CD4-positive, alpha-beta T cell (primary cell): ENCODE measurements at regions of chr9 and their contacts with region 1.

Region 1: DNA sequence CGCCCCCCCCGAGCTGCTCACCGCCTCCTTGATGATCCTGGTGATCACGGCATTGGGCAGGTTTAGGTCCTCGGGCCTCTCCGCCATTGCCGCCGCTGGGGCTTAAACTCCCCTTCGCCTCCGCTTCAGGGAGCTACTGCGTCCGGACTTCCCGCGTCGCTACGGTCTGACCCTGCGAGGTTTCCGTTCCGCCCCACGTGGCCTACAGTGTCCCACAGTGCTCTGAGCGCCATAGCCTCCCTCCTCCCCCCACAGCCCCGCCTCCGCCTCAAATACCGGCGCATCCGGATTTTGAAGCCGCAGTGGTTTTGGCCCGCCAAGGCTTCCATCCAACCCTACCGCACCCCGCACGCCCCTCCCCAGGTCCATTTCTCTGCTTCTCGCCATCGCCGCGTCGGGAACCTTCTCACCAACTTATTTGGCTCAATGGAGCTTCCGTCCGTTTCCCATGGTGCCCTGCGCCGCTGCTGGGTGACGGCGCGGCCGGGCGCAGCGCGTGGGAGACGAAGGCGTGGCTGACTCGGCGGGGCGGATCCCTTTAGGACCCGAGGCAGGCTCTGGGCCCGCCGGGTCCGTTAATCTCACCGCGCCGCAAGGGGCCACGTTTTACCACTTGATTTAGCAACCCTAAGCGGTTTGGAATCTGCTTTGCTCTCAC is at the starts of genes C9orf43 and POLE3:
- DNase-seq: peak; percentile 89 to 97 (median 92)
- ATAC-seq: peak; percentile 83
- H3K4me3 ChIP-seq: peak within 1 kb of the TSS; percentile 83
- H3K4me3 Mint-ChIP-seq: peak within 1 kb of the TSS; percentile 99
- H3K27ac ChIP-seq: peak within 1 kb of the TSS; percentile 74 to 94
- H3K27ac Mint-ChIP-seq: peak within 1 kb of the TSS; percentile 94
- H3K4me1 ChIP-seq: peaks cover 19% of the 10 kb centered on the region
- H3K4me1 Mint-ChIP-seq: peaks cover 37% of the 10 kb centered on the region
- H3K27me3 ChIP-seq: no peaks in the 10 kb centered on the region
- H3K27me3 Mint-ChIP-seq: no peaks in the 10 kb centered on the region
- CTCF ChIP-seq: no peak
- total RNA-seq, gene C9orf43: 0.60 to 0.95 TPM
- total RNA-seq, gene POLE3: 63.6 to 64.9 TPM

Region 2: DNA sequence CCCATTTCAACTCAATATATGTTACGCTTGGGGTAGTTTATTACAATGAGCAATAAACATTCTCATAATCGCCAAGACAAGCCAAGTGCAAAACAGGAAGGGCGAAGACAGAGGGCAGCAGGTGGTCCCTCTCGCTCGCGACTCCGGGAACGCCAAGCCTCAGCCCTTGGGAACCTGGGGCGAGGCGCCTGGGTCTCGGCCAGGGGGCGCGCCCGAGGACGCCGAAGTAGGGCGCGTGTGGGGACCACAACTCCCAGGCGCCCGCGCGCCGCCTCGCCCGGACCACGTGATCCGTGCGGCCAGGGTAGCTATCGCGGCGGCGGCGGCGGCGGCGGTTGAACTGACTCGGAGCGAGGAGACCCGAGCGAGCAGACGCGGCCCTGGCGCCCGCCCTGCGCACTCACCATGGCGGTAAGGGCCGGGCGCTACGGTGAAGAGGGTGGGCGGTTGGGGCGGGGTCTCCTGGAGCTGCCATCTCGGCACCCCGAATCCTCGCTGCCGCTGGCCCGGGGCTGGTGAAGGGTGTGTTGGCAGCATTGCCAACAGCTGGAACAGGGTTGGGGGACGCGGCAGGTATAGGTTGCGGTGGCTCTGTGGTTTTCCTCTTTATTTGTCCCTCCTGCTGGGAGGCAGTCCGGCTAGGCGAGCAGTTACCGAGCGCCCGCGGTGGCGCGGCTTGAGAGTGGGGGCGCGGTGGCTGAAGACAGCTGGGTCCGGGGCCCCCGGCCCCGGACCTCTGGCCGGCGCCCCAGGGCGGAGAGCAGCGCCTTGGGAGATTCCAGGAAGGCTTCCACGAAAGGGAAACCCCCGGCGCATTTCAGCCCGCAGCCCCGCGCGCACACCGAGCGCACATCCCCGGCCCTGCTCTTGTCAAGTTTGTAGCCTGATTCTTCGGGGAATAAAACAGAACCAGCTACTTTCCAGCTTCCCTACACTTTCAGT is 259.4 kb before region 1 on chr9 and contains the start of gene SLC31A2:
- CTCF ChIA-PET with region 1: no interaction called
- POLR2A ChIA-PET with region 1: interaction called, 8 read pairs
- intact Hi-C with region 1: loop called (anchors 5 to 10 kb)
- DNase-seq: peak; percentile 68 to 92 (median 81)
- ATAC-seq: peak; percentile 95
- H3K4me3 ChIP-seq: peak within 1 kb of the TSS; percentile 90
- H3K4me3 Mint-ChIP-seq: peak within 1 kb of the TSS; percentile 88
- H3K27ac ChIP-seq: peak within 1 kb of the TSS; percentile 55 to 56
- H3K27ac Mint-ChIP-seq: peak within 1 kb of the TSS; percentile 53
- H3K4me1 ChIP-seq: peaks cover 25% of the 10 kb centered on the region
- H3K4me1 Mint-ChIP-seq: peaks cover 35% of the 10 kb centered on the region
- H3K27me3 ChIP-seq: peaks cover 2% of the 10 kb centered on the region in 2 experiments
- H3K27me3 Mint-ChIP-seq: peaks cover 6% of the 10 kb centered on the region
- CTCF ChIP-seq: peak; percentile 61
- total RNA-seq, gene SLC31A2: 4.8 to 5.4 TPM

Region 3: DNA sequence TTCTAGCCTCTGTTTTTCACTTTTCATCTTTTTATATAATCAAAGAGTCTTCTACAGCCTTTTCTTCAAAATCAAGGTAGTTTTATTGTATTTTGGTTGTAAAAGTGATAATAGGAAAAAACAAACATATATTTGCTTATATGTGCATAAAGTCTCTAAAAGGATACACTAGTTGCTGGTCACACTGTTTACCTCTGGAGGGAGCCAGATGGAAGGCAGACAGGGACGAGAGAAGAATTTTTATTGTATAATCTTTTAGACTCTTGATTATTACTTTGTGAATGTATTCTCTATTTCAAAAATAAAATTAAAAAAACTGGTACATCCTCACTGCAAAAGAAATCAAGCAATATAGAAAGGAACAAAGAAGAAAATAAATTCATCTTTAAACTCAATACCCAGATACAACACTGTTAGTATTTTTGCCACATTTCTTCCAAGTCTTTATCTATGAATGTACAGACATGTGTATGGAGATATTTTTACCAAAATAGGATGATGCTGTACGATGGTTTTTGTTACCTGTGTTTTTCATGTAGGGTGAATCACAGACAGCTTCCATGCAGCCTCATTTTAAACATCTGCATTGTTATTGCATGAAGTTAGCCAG is 101.0 kb before region 1 on chr9:
- CTCF ChIA-PET with region 1: no interaction called
- POLR2A ChIA-PET with region 1: no interaction called
- intact Hi-C with region 1: loop called in 1 of 2 experiments (anchors 1 kb)
- DNase-seq: peak in 7 of 14 experiments; percentile 1 to 56 (median 24)
- ATAC-seq: peak; percentile 46
- H3K4me3 ChIP-seq: no peak overlapping the region
- H3K4me3 Mint-ChIP-seq: no peak overlapping the region
- H3K27ac ChIP-seq: no peak overlapping the region
- H3K27ac Mint-ChIP-seq: no peak overlapping the region
- H3K4me1 ChIP-seq: no peaks in the 10 kb centered on the region
- H3K4me1 Mint-ChIP-seq: no peaks in the 10 kb centered on the region
- H3K27me3 ChIP-seq: no peaks in the 10 kb centered on the region
- H3K27me3 Mint-ChIP-seq: no peaks in the 10 kb centered on the region
- CTCF ChIP-seq: peak; percentile 56

Region 4: GRCh38 chr9:113340017-113340699 is 70.2 kb before region 1 on chr9 and contains the start of gene WDR31:
- CTCF ChIA-PET with region 1: no interaction called
- POLR2A ChIA-PET with region 1: interaction called, 13 read pairs
- intact Hi-C with region 1: loop called in 1 of 2 experiments (anchors 10 kb)
- DNase-seq: peak; percentile 56 to 88 (median 74)
- ATAC-seq: peak; percentile 99
- H3K4me3 ChIP-seq: peak within 1 kb of the TSS; percentile 82
- H3K4me3 Mint-ChIP-seq: peak within 1 kb of the TSS; percentile 91
- H3K27ac ChIP-seq: no peak within 1 kb of the TSS
- H3K27ac Mint-ChIP-seq: peak within 1 kb of the TSS; percentile 14
- H3K4me1 ChIP-seq: peaks cover 18% of the 10 kb centered on the region
- H3K4me1 Mint-ChIP-seq: peaks cover 25% of the 10 kb centered on the region
- H3K27me3 ChIP-seq: no peaks in the 10 kb centered on the region
- H3K27me3 Mint-ChIP-seq: peaks cover 11% of the 10 kb centered on the region
- CTCF ChIP-seq: no peak
- total RNA-seq, gene WDR31: 0.14 to 0.22 TPM

Region 5: GRCh38 chr9:113376634-113377567 is 33.4 kb before region 1 on chr9 and contains the start of gene HDHD3:
- CTCF ChIA-PET with region 1: no interaction called
- POLR2A ChIA-PET with region 1: interaction called, 22 read pairs
- intact Hi-C with region 1: loop called in 1 of 2 experiments (anchors 2 kb)
- DNase-seq: peak; percentile 50 to 93 (median 76)
- ATAC-seq: peak; percentile 88
- H3K4me3 ChIP-seq: peak within 1 kb of the TSS; percentile 96
- H3K4me3 Mint-ChIP-seq: peak within 1 kb of the TSS; percentile 87
- H3K27ac ChIP-seq: peak within 1 kb of the TSS; percentile 59 to 65
- H3K27ac Mint-ChIP-seq: peak within 1 kb of the TSS; percentile 90
- H3K4me1 ChIP-seq: peaks cover 23% of the 10 kb centered on the region
- H3K4me1 Mint-ChIP-seq: peaks cover 21% of the 10 kb centered on the region
- H3K27me3 ChIP-seq: no peaks in the 10 kb centered on the region
- H3K27me3 Mint-ChIP-seq: no peaks in the 10 kb centered on the region
- CTCF ChIP-seq: no peak
- total RNA-seq, gene HDHD3: 12.8 to 13.2 TPM

Region 6: DNA sequence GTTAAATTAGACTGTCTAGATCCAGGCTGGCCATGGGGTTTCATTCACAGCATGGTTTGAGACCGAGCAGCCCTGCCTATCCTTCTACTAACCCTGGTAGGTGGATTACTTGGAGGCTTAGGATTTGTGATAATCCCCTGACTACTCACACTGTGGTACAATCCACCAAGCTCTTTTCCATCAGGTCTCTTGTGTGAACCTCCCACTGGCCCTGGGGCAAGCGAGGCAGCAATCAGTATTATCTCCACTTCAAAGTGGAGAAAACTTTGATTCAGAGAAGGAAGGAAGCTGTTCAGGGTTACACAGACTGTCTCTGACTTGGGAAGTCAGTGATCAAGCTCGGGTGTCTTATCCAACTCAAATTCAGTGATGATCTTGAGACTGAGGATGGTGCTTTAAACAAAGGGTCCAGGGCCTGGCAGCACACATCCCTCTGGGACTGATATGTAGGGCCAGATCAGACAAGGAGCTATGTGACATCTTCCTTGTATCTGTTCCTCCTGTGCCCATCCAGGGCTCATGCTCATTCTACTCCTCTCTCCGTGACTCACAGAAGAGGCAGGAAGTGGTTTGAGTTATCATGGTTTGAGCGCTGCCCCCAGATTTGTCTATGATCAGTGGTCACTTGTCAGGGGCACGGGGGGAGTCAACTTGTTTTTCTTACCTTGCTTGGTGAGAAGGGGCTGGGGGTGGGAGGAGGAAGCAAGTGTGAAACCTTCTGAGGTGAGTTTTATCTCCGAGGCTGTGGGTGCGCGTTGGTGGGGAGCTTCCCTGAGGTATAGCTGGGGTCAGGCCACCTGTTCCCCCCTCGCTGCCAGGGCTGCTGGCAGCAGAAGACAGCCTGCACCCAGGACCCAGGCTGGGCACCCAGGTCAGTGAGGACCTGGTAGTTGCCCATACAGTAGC is 101.8 kb after region 1 on chr9:
- CTCF ChIA-PET with region 1: no interaction called
- POLR2A ChIA-PET with region 1: interaction called, 20 read pairs
- intact Hi-C with region 1: no loop called
- DNase-seq: peak in 13 of 14 experiments; percentile 33 to 84 (median 52)
- ATAC-seq: peak; percentile 60
- H3K4me3 ChIP-seq: peak overlapping the region; percentile 27
- H3K4me3 Mint-ChIP-seq: peak overlapping the region; percentile 84
- H3K27ac ChIP-seq: peak overlapping the region; percentile 71 to 77
- H3K27ac Mint-ChIP-seq: peak overlapping the region; percentile 86
- H3K4me1 ChIP-seq: peaks cover 58% of the 10 kb centered on the region
- H3K4me1 Mint-ChIP-seq: peaks cover 62% of the 10 kb centered on the region
- H3K27me3 ChIP-seq: no peaks in the 10 kb centered on the region
- H3K27me3 Mint-ChIP-seq: no peaks in the 10 kb centered on the region
- CTCF ChIP-seq: no peak

Region 7: DNA sequence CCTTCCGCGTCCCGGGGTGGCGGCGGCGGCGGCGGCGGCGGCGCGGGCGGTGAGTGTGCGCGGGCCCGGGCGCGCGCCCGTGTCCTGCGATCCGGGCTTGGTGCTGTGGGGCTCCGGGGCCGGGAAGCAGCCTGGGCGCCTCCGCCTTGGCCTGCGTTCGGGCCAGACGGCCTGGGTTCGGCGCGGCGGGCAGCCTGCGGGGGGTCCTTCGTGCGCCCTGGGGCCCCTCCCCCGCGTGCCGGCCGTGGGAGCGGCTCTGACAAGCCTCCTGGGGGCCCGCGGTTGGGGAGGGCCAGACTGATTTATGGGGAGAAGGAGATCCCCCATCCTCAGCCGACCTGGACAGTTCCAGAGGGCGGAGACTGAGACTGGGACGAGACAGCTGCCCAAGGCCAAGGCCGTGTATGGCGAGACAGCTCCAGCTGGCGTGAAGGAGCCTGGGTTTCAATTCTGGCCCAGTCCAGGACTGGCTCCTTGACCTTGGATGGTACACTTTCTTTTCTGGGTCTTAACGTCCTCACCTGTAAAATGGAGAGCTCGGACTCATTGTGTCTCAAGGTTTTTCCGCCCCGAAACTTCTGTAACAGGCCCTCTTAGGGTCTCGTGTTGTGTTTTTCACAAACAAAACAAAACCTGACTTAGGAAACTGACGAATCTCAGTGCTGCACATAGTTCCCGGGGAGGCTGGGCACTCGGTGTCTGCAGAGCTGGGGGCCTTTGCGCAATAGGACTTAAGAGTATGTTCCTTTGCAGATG is 1201.4 kb after region 1 on chr9:
- CTCF ChIA-PET with region 1: no interaction called
- POLR2A ChIA-PET with region 1: no interaction called
- intact Hi-C with region 1: loop called in 1 of 2 experiments (anchors 10 kb)
- DNase-seq: peak in 13 of 14 experiments; percentile 19 to 78 (median 50)
- ATAC-seq: peak; percentile 70
- H3K4me3 ChIP-seq: peak overlapping the region; percentile 90
- H3K4me3 Mint-ChIP-seq: peak overlapping the region; percentile 97
- H3K27ac ChIP-seq: peak overlapping the region; percentile 68 to 78
- H3K27ac Mint-ChIP-seq: peak overlapping the region; percentile 92
- H3K4me1 ChIP-seq: peaks cover 43% of the 10 kb centered on the region
- H3K4me1 Mint-ChIP-seq: peaks cover 48% of the 10 kb centered on the region
- H3K27me3 ChIP-seq: no peaks in the 10 kb centered on the region
- H3K27me3 Mint-ChIP-seq: no peaks in the 10 kb centered on the region
- CTCF ChIP-seq: no peak